Heart left ventricle (tissue), 16 donors: ENCODE measurements at regions of chr4 and their contacts with region 1.

Region 1: GRCh38 chr4:55078987-55079386 is 46.4 kb downstream of the KDR start:
- DNase-seq: peak; percentile 73 to 81 (median 77)
- ATAC-seq: peak; percentile 64 to 95 (median 85)
- H3K4me3 ChIP-seq: peak overlapping the region in 2 of 12 donors; percentile 5 to 7
- H3K27ac ChIP-seq: peak overlapping the region; percentile 42 to 86 (median 78)
- H3K4me1 ChIP-seq: peaks cover 0 to 28% (median 16%) of the 10 kb centered on the region in 12 donors
- H3K27me3 ChIP-seq: no peaks in the 10 kb centered on the region
- CTCF ChIP-seq: no peak
- POLR2A ChIP-seq: no peak

Region 2: DNA sequence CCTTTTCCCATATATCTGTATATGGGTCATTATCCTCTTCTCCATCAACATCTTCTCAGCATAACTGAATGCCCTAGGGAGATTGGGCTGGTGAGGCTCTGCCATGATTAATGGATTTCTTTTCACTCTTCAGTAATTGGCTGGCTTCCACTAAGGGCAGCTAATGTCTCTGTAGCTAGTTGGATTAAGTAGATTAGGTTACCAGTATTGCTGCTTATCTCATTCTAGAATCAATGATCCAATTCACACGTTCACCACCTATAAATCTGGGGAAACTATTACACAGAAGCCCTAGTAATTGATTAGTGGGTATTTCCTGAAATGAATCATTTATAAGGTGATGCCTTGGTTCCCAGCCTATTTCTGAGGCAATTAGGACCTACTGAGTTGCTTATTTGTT is 48.4 kb before region 1 on chr4:
- intact Hi-C with region 1: loop called in 2 of 10 experiments (anchors 5 kb)
- DNase-seq: no peak
- ATAC-seq: no peak
- H3K4me3 ChIP-seq: no peak overlapping the region
- H3K27ac ChIP-seq: peak overlapping the region in 5 of 12 donors; percentile 29 to 61 (median 51)
- H3K4me1 ChIP-seq: peaks cover 0 to 37% (median 11%) of the 10 kb centered on the region in 12 donors
- H3K27me3 ChIP-seq: no peaks in the 10 kb centered on the region
- CTCF ChIP-seq: no peak
- POLR2A ChIP-seq: no peak

Region 3: GRCh38 chr4:55038176-55038890 is 40.7 kb before region 1 on chr4:
- intact Hi-C with region 1: loop called in 2 of 10 experiments (anchors 5 kb)
- DNase-seq: peak in 4 of 5 donors; percentile 28 to 54 (median 45)
- ATAC-seq: peak; percentile 93 to 97 (median 94)
- H3K4me3 ChIP-seq: no peak overlapping the region
- H3K27ac ChIP-seq: peak overlapping the region; percentile 22 to 87 (median 70)
- H3K4me1 ChIP-seq: peaks cover 0 to 47% (median 18%) of the 10 kb centered on the region in 12 donors
- H3K27me3 ChIP-seq: no peaks in the 10 kb centered on the region
- CTCF ChIP-seq: no peak
- POLR2A ChIP-seq: peak in 1 of 2 donors; percentile 10

Region 4: DNA sequence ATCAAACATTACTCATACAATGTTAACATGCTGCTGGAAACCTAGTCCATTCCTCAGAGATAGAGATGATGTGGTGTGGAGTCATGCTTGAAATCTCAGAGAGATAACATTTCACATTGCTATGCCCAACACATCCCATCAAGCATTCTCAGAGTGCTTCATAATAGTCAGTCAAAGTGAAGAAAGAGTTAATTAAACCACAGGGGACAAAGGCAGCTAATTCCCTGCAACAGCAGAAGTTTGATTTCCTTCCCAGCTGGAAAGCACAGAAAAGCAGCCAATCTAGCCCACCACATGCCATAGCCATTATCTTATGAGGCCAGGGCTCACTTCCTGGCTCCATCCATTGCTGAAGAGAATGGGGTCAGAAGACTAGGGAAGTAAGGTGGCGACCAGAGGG is 37.5 kb after region 1 on chr4:
- intact Hi-C with region 1: loop called in 2 of 10 experiments (anchors 5 kb)
- DNase-seq: no peak
- ATAC-seq: peak in 1 of 4 donors; percentile 48
- H3K4me3 ChIP-seq: no peak overlapping the region
- H3K27ac ChIP-seq: peak overlapping the region in 2 of 12 donors; percentile 2 to 44
- H3K4me1 ChIP-seq: peaks cover 0 to 23% (median 2%) of the 10 kb centered on the region in 12 donors
- H3K27me3 ChIP-seq: no peaks in the 10 kb centered on the region
- CTCF ChIP-seq: no peak
- POLR2A ChIP-seq: no peak